Heart left ventricle (tissue), 16 donors: ENCODE measurements at regions of chr2 and their contacts with region 1.

Region 1: DNA sequence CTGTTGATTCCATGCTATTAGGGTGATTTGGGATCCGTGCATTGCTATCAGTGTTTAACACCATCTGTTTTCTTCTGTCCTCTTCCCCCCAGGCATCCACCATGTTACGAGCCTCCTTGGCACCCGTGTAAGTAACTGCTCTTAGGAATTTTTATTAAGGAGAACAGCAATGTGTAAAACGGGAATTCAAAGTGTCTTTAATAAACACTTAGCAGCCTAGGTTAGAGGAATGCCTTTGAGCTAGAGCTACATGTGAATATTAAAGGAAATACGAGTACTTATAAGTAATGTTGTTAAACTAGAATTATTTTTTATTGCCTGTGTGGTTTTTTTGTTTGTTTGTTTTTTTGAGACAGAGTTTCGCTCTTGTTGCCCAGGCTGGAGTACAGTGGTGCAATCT is 58.1 kb downstream of the ARMC9 start:
- DNase-seq: no peak
- ATAC-seq: no peak
- H3K4me3 ChIP-seq: no peak overlapping the region
- H3K27ac ChIP-seq: peak overlapping the region in 1 of 12 donors; percentile 1
- H3K4me1 ChIP-seq: no peaks in the 10 kb centered on the region
- H3K27me3 ChIP-seq: no peaks in the 10 kb centered on the region
- CTCF ChIP-seq: no peak
- POLR2A ChIP-seq: no peak

Region 2: DNA sequence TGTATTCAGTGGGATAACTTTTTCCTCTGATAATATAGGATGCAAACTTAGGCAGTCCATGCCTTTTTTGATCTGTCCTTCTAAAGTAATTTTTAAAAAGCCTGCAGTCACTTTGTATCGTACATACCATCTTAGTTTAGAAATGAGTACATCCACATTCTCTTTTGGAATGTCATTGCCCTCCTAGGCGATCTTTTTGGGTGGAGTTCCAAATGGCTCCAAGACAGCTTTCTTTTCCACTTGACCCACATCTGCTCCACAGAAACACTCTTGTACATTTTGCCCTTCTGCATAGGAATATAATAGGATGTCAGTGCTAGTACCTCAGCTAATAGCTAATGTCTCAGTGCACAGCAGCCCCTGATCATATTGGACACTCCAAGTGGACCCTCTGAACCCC is 109.8 kb before region 1 on chr2:
- intact Hi-C with region 1: no loop called
- DNase-seq: no peak
- ATAC-seq: no peak
- H3K4me3 ChIP-seq: no peak overlapping the region
- H3K27ac ChIP-seq: no peak overlapping the region
- H3K4me1 ChIP-seq: no peaks in the 10 kb centered on the region
- H3K27me3 ChIP-seq: no peaks in the 10 kb centered on the region
- CTCF ChIP-seq: no peak
- POLR2A ChIP-seq: no peak

Region 3: DNA sequence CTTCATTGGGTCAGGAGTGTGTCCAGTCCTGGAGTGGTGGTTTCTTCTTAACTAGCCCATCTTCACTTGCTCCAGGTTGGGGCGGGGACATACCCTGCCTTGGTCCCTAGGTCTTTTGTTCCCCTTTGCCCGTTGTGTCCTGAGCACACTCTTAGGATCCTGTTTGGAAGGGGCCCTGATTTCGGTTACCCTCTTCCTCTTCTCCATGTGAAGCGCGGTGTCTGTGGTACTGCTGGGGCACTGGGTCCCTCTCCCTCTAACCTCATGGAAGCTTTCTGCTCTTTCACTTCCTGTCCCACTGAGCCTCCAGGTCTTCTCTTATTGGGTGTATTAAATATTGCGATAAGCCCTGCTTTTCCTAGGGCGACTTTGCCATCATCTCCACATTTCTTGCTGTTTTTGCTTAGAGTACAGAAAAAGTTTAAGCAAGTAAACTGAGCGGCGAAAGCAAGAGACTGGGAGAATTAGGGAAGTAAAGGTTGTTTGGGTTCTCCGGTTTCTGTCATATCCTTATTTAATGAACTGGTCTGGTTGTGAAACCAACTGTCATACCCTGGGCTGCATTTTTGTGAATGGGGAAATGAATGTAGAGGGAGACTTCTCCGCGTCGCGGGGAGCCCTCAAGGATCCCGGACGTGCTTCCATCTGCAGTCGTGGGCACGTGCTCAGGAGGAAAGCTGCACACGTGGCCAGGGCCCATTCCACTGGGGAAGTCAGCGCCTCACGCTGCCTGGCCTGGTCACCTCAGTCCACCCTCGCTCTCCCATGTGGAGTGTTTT is 65.3 kb after region 1 on chr2:
- intact Hi-C with region 1: loop called in 1 of 10 experiments (anchors 2 kb)
- DNase-seq: peak; percentile 48 to 82 (median 61)
- ATAC-seq: peak in 3 of 4 donors; percentile 11 to 56 (median 12)
- H3K4me3 ChIP-seq: no peak overlapping the region
- H3K27ac ChIP-seq: peak overlapping the region; percentile 13 to 85 (median 52)
- H3K4me1 ChIP-seq: peaks cover 0 to 55% (median 25%) of the 10 kb centered on the region in 12 donors
- H3K27me3 ChIP-seq: no peaks in the 10 kb centered on the region
- CTCF ChIP-seq: no peak
- POLR2A ChIP-seq: no peak

Region 4: GRCh38 chr2:231648587-231649174 is 392.2 kb after region 1 on chr2:
- intact Hi-C with region 1: no loop called
- DNase-seq: peak; percentile 70 to 88 (median 74)
- ATAC-seq: peak; percentile 67 to 82 (median 79)
- H3K4me3 ChIP-seq: no peak overlapping the region
- H3K27ac ChIP-seq: peak overlapping the region in 1 of 12 donors; percentile 33
- H3K4me1 ChIP-seq: peaks cover 1 to 38% (median 16%) of the 10 kb centered on the region in 12 donors
- H3K27me3 ChIP-seq: no peaks in the 10 kb centered on the region
- CTCF ChIP-seq: peak; percentile 51 to 79 (median 65)
- POLR2A ChIP-seq: no peak